Right cardiac atrium (tissue), 5 donors: ENCODE measurements at regions of chr21 and their contacts with region 1.

Region 1: GRCh38 chr21:29091032-29091431 is 17.6 kb upstream of the CCT8 start:
- DNase-seq: no peak
- ATAC-seq: no peak
- H3K4me3 ChIP-seq: no peak overlapping the region
- H3K27ac ChIP-seq: no peak overlapping the region
- H3K4me1 ChIP-seq: no peaks in the 10 kb centered on the region
- H3K27me3 ChIP-seq: no peaks in the 10 kb centered on the region

Region 2: GRCh38 chr21:29155118-29155932 is 64.3 kb after region 1 on chr21:
- intact Hi-C with region 1: loop called in 3 of 4 experiments (anchors 10 kb)
- DNase-seq: peak; percentile 76 to 90 (median 87)
- ATAC-seq: peak; percentile 95 to 96
- H3K4me3 ChIP-seq: peak overlapping the region; percentile 50
- H3K27ac ChIP-seq: peak overlapping the region; percentile 56
- H3K4me1 ChIP-seq: no peaks in the 10 kb centered on the region
- H3K27me3 ChIP-seq: no peaks in the 10 kb centered on the region

Region 3: GRCh38 chr21:29372063-29372802 is 281.2 kb after region 1 on chr21:
- intact Hi-C with region 1: loop called (anchors 2 to 5 kb)
- DNase-seq: no peak
- ATAC-seq: peak; percentile 89 to 91
- H3K4me3 ChIP-seq: no peak overlapping the region
- H3K27ac ChIP-seq: no peak overlapping the region
- H3K4me1 ChIP-seq: no peaks in the 10 kb centered on the region
- H3K27me3 ChIP-seq: no peaks in the 10 kb centered on the region

Region 4: DNA sequence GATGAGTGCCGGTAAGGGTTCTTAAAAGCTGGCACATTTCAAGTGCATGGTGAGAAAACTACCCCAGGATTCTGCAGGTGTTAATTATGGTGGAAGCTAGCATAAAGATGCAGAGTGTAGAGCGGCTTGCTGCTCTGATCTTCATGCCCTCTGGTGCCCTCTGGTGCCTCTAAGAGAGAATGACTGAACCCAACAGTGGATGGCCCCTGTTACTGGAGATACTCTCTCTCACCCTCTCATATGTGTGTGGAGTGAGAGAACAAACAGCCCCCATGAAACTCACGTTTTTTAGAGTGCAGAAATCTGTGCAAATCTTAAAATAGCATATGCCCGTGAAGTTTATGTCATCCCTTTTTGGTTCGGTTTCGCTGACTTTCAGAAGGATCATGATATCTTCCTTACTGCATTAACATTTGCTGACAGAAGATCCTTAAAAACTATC is 758.7 kb after region 1 on chr21:
- intact Hi-C with region 1: loop called in 1 of 4 experiments (anchors 10 kb)
- DNase-seq: peak in 2 of 3 donors; percentile 26 to 37
- ATAC-seq: peak; percentile 81 to 87
- H3K4me3 ChIP-seq: no peak overlapping the region
- H3K27ac ChIP-seq: no peak overlapping the region
- H3K4me1 ChIP-seq: no peaks in the 10 kb centered on the region
- H3K27me3 ChIP-seq: no peaks in the 10 kb centered on the region